Activated CD4-positive, alpha-beta T cell treated with anti-CD3 and anti-CD28 coated beads for 36 hours (primary cell): ENCODE measurements at regions of chr9 and their contacts with region 1.

Region 1: GRCh38 chr9:137453643-137454081 is 5.5 kb downstream of the NSMF start:
- DNase-seq: peak; percentile 84
- ATAC-seq: peak; percentile 83
- H3K4me3 Mint-ChIP-seq: no peak overlapping the region
- H3K27ac Mint-ChIP-seq: no peak overlapping the region
- H3K4me1 Mint-ChIP-seq: peaks cover 38% of the 10 kb centered on the region
- H3K27me3 Mint-ChIP-seq: no peaks in the 10 kb centered on the region

Region 2: DNA sequence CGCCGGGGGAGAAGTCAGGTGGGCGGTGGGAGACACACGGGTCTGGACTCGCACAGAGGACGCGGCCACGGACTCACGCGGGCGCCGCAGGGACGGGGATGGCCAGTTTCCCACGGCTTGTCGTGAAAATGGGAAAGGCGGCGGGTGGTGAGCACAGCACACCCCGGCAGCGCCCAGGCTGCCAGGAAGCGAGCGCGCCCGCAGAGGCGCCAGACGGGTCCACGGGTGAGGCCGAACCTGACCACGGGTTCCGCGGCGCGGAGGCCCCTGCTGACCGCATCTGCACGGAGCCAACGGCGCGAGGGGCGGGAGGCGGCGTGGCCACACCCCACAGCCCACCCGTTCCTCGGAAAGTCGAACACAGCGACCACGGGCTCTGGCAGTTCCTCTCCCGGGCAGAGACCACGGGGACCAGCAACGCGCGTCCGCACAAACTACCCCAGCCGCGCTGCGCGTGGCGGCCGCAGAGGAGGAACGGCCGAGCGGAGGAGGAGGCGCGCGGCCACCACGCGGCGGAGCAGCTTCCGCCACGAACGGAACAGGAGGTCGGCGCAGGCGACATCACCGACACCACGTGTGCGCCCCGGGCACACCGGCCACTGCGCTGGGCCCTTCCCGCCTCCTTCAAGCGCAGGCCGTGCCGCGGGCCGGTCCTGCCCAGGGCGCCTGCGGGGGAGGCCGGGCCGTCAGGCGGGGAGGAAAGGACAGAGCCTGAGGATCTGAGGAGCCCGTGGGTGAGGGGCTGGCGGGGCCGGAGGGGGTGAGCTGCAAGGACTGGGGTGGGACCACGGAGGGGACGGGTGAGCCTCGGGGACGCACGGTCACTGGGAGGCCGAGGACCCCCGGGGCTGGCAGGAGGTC is 36.3 kb before region 1 on chr9:
- CTCF ChIA-PET with region 1: no interaction called
- POLR2A ChIA-PET with region 1: no interaction called
- intact Hi-C with region 1: no loop called
- DNase-seq: no peak
- ATAC-seq: peak; percentile 59
- H3K4me3 Mint-ChIP-seq: peak overlapping the region; percentile 62
- H3K27ac Mint-ChIP-seq: no peak overlapping the region
- H3K4me1 Mint-ChIP-seq: peaks cover 12% of the 10 kb centered on the region
- H3K27me3 Mint-ChIP-seq: no peaks in the 10 kb centered on the region

Region 3: GRCh38 chr9:137429974-137430722 is 23.5 kb before region 1 on chr9:
- CTCF ChIA-PET with region 1: no interaction called
- POLR2A ChIA-PET with region 1: no interaction called
- intact Hi-C with region 1: no loop called
- DNase-seq: no peak
- ATAC-seq: no peak
- H3K4me3 Mint-ChIP-seq: no peak overlapping the region
- H3K27ac Mint-ChIP-seq: no peak overlapping the region
- H3K4me1 Mint-ChIP-seq: no peaks in the 10 kb centered on the region
- H3K27me3 Mint-ChIP-seq: no peaks in the 10 kb centered on the region

Region 4: GRCh38 chr9:137478962-137479861 is 25.6 kb after region 1 on chr9:
- CTCF ChIA-PET with region 1: no interaction called
- POLR2A ChIA-PET with region 1: no interaction called
- intact Hi-C with region 1: no loop called
- DNase-seq: no peak
- ATAC-seq: no peak
- H3K4me3 Mint-ChIP-seq: no peak overlapping the region
- H3K27ac Mint-ChIP-seq: no peak overlapping the region
- H3K4me1 Mint-ChIP-seq: peaks cover 9% of the 10 kb centered on the region
- H3K27me3 Mint-ChIP-seq: no peaks in the 10 kb centered on the region

Region 5: DNA sequence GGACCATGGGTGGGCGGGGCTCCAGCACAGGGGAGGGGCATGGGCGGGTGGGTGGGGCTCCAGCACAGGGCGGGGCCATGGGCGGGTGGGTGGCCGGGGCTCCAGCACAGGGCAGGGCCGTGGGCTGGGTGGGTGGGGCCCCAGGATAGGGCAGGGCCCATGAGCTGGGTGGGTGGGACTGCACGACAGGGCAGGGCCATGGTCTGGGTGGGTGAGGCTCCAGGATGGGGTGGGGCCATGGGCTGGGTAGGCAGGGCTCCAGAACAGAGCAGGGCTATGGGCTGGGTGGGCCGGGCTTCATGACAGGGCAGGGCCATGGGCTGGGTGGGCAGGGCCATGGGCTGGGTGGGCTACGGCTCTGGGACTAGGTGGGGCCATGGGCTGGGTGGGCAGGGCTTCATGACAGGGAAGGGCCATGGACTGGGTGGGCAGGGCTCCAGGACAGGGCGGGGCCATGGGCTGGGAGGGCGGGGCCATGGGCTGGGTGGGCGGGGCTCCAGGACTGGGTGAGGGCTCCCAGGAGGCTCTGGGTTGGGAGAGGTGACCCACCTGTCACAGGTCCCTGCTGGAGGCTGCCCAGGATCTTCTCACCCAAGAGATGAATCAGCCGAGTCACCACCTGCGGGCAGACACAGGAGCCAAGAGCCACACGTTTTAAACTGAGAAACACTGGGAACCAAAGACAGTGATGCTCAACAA is 39.0 kb after region 1 on chr9:
- CTCF ChIA-PET with region 1: no interaction called
- POLR2A ChIA-PET with region 1: no interaction called
- intact Hi-C with region 1: loop called in 1 of 2 experiments (anchors 1 kb)
- DNase-seq: peak; percentile 63
- ATAC-seq: peak; percentile 85
- H3K4me3 Mint-ChIP-seq: no peak overlapping the region
- H3K27ac Mint-ChIP-seq: no peak overlapping the region
- H3K4me1 Mint-ChIP-seq: peaks cover 3% of the 10 kb centered on the region
- H3K27me3 Mint-ChIP-seq: no peaks in the 10 kb centered on the region

Region 6: DNA sequence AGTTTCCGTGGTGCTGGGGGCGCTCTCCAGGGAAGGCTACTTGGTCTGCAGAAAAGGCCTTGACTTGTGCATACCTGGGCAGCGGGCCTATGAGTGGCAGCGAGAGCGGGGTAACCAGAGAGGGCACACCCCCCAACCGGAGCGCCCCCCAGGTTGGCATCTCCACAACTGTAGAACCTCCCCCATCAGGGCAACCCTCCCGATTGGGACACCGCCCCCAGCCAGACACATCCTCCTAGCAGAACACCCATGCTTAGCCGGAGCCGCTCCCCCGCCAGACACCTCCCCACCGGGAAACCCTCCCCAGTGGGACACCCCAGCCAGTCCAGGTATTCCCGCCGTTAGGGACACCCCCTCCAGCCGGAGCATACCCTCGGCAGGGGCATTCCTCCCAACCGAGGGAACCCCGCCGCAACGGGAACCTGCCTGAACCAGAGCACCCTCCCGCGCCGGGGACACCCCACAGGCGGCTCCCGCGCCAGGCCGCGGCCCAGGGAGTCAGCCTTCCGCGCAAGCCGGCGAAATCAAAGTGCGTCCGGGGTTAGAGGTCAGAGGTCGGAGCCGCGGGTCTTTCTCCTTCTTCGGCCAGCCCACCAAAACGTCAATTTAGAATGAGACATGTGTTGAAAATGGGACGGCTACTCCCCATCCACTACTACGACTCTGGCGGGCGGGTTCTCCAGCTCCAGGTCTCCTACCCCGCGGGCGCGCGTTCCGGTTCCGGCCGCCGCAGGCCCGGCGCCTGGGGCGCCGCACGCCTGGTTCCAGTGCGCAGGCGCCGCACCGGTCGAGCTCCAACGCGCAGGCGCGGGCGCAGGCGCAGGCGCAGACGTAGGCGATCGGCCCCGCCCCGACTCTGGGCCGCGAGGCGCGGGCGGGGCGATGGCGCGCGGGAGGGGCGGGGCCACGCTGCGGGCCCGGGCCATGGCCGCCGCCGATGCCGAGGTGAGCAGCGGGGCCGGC is 164.7 kb after region 1 on chr9 and contains the start of gene EHMT1:
- CTCF ChIA-PET with region 1: no interaction called
- POLR2A ChIA-PET with region 1: no interaction called
- intact Hi-C with region 1: loop called in 1 of 2 experiments (anchors 1 kb)
- DNase-seq: peak; percentile 92
- ATAC-seq: peak; percentile 82
- H3K4me3 Mint-ChIP-seq: peak within 1 kb of the TSS; percentile 85
- H3K27ac Mint-ChIP-seq: peak within 1 kb of the TSS; percentile 90
- H3K4me1 Mint-ChIP-seq: peaks cover 37% of the 10 kb centered on the region
- H3K27me3 Mint-ChIP-seq: no peaks in the 10 kb centered on the region
- total RNA-seq, gene EHMT1: 66.6 to 76.7 TPM